ENCODE measurements at regions of chr12 and their contacts with region 1.

Region 1: DNA sequence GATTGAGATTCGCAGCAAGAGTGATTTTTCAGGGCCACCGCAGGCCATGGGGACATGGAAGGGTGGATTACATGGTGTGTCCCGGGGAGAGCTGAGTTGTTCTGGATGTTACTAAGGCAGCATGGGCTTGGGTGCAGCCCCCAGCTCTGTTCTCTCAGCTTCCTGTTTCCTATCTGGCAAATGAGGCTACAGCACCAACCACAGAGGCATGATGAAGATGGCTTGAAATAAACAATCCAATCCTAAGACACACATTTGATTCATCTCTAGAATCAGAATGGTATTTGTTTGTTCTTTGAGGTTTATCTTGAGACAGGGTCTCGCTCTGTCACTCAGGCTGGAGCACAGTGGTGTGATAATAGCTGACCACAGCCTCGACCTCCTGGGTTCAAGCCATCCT is 21.6 kb downstream of the GLTP start:
- DNase-seq: no peak
- H3K4me3 ChIP-seq: no peak overlapping the region
- CTCF ChIP-seq: no peak

Region 2: DNA sequence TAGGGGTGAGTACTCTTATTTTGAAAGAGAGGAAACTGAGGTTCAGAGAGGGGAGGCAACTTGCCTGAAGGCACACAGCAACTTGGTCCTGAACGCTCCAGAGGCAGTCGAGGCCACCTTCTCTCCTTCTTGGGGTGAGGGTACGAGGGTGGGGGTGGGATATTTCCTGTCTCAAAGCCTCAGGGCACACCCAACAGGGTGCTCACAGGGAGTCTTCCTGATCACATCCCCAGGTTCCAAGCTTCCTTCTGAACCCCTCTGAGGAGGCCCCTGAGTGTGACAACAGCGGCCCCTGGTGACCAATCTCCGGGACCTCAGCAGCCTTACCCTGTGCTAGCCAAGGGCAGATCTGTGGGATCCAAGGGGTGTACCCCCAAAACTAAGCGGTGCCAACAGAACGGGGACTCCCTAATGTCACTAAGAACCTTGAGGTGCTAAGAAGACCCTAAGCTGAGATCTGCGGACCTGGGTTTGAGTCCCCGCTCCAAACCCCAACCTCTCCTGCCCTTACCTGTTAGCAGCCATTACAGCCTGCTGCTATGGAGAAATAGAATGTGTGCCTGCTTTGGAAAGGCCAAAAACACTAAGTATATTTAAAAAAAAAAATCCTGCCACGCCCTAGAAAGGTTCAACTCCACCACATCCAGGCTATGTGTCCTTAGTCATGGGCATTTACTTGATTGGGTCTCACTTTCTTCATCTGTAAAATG is 83.4 kb before region 1 on chr12:
- CTCF ChIA-PET with region 1: no interaction called
- POLR2A ChIA-PET with region 1: no interaction called
- DNase-seq: no peak
- H3K4me3 ChIP-seq: no peak overlapping the region
- CTCF ChIP-seq: peak; percentile 91

Region 3: GRCh38 chr12:109804820-109805761 is 53.7 kb before region 1 on chr12:
- CTCF ChIA-PET with region 1: interaction called, 41 read pairs
- POLR2A ChIA-PET with region 1: no interaction called
- DNase-seq: no peak
- H3K4me3 ChIP-seq: no peak overlapping the region
- CTCF ChIP-seq: peak; percentile 93

Region 4: GRCh38 chr12:109870648-109871047 is 11.9 kb after region 1 on chr12:
- CTCF ChIA-PET with region 1: interaction called, 76 read pairs
- POLR2A ChIA-PET with region 1: no interaction called
- DNase-seq: no peak
- H3K4me3 ChIP-seq: no peak overlapping the region
- CTCF ChIP-seq: no peak

Region 5: DNA sequence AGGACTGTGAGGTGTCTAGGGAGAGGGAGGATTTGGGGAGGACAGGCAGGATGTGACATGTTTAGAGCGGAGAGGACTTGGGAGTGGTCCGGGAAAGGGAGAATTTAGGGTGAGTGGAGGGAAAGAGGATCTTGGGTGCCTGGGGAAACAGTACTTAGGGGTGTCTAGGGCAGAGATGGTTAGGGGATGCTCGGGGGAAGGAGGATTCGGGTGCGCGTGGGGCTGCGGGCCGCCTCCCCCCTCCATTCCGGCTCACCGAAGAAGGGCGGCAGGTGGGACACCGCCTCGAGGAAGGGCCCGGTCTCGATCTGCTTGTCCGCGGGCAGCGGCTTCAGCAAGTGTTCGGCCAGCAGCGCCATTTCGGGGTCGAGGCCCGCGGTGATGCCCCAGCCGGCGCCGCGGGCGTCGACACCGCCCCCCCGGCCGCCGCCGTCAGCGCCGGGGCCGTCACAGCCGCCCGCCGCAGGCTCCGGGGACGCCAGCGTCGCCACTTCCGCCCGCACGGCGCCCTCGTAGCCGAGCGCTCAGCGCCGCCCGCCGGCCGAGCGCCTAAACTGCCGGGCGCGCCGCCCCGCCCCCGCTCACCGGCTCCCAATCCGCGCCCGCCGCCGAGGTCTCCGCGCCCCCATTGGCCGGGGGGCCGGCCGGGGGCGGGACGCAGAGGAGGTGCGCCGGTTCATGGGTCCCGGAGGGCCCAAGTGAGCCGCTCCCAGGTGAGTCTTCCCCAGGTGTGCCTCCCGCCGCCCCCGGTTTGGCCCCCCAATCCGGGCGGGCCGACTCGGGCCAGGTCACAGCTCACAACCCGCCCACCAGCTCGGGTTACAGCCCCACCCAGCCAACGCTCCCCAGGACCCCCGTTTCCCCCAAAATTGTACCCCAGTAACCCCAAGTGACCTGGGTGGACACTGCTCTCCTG is 21.5 kb after region 1 on chr12 and contains the start of gene GLTP:
- CTCF ChIA-PET with region 1: interaction called, 14 read pairs
- POLR2A ChIA-PET with region 1: no interaction called
- DNase-seq: no peak
- H3K4me3 ChIP-seq: peak within 1 kb of the TSS; percentile 68
- CTCF ChIP-seq: peak; percentile 51

Region 6: DNA sequence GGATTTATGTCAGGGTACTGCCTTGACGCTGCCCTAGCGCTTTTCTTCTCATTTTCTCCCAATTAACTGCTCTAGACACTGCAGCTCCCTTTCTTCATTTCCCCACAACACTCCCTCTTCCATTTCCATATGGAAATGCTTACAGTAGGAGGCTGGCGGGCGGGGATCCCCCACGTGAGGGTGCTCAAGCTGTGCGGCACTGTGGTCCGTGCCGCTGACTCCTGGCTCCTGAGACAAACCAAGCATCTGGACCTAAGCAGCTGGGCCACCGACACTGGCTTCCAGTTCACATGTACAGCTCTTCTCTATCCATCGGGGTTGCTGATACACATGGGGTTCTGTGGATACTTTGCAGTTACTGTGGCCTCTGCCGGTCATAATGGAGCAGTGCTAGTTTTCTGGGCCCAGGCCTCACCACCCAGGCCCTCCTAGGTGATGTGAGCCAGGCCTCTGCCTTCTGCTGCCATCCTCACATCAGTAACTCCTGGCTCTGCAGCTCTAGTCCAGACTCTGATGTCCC is 61.6 kb after region 1 on chr12:
- CTCF ChIA-PET with region 1: interaction called, 159 read pairs
- POLR2A ChIA-PET with region 1: no interaction called
- DNase-seq: no peak
- H3K4me3 ChIP-seq: no peak overlapping the region
- CTCF ChIP-seq: peak; percentile 9

Region 7: GRCh38 chr12:109927622-109928021 is 68.9 kb after region 1 on chr12:
- CTCF ChIA-PET with region 1: interaction called, 159 read pairs
- POLR2A ChIA-PET with region 1: no interaction called
- DNase-seq: no peak
- H3K4me3 ChIP-seq: no peak overlapping the region
- CTCF ChIP-seq: peak; percentile 75

Region 8: DNA sequence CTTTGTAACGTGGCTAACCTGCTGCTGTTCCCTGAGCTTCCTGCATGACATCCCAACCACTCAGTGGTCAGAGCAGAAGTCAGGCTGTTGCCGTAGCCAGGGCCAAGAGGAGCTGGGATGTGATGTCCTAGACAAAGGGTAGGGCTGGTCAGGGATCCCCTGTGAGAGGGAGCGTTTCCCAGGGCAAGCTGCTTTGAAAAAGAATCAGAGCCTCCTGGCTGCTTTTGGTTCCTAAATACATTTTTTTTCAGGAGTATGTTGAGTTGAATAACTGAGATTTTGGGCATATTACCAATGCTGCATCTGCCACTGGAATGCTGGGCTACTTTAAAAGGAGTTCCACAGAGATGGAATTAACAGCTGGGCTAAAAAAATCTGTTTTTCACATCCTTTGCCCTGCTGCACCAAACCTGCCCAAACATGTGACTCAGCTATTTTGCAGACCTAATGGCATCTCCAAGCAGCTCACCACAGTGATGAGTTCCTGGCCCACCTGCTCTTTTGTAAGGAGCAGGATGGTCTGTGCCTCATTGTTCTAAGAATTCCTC is 164.4 kb after region 1 on chr12:
- CTCF ChIA-PET with region 1: interaction called, 11 read pairs
- POLR2A ChIA-PET with region 1: no interaction called
- DNase-seq: peak; percentile 40
- H3K4me3 ChIP-seq: no peak overlapping the region
- CTCF ChIP-seq: no peak

Region 9: GRCh38 chr12:110223777-110224378 is 365.1 kb after region 1 on chr12:
- CTCF ChIA-PET with region 1: no interaction called
- POLR2A ChIA-PET with region 1: no interaction called
- DNase-seq: no peak
- H3K4me3 ChIP-seq: no peak overlapping the region
- CTCF ChIP-seq: no peak

Measured in AG04449 (cell line).